ENCODE measurements at regions of chr4 and their contacts with region 1.

Region 1: DNA sequence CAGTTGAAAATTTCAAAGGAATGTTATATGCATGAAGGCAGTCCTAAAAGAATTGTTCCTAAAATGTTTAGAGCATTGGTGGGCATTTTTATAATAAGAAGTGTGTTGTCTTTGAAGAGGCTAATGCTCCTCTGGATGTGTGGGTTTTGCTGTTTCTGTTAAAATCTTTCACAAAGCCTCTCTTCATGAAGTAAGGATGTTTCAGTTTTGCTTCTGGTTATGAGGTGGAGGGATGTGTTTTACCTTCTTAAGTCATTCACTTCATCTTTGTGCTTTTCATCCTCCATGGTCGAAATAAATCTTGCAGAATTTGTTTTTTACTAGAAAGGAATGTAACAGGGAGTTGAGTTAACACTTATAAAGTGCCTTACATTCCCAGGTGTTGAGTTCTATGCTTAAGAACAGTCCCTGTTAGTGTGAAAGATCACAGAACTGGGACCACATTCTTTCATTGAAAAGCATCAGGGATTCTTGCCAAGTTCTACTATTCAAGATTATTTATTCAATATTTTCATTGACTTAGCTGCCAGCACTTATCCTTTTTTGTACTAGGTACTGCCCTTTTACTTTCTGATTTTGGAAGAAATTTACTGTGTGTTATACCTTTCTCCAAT is 21.1 kb downstream of the FHIP1A start:
- DNase-seq: no peak
- H3K4me3 Mint-ChIP-seq: no peak overlapping the region
- H3K27ac Mint-ChIP-seq: peak overlapping the region; percentile 15
- H3K4me1 Mint-ChIP-seq: peaks cover 57% of the 10 kb centered on the region
- H3K27me3 Mint-ChIP-seq: no peaks in the 10 kb centered on the region
- CTCF ChIP-seq: no peak

Region 2: GRCh38 chr4:151408630-151409469 is 21.2 kb before region 1 on chr4 and contains the start of gene FHIP1A:
- CTCF ChIA-PET with region 1: interaction called, 5 read pairs
- POLR2A ChIA-PET with region 1: interaction called, 30 read pairs
- intact Hi-C with region 1: no loop called
- DNase-seq: peak; percentile 95
- H3K4me3 Mint-ChIP-seq: peak within 1 kb of the TSS; percentile 90
- H3K27ac Mint-ChIP-seq: peak within 1 kb of the TSS; percentile 94
- H3K4me1 Mint-ChIP-seq: peaks cover 22% of the 10 kb centered on the region
- H3K27me3 Mint-ChIP-seq: no peaks in the 10 kb centered on the region
- CTCF ChIP-seq: no peak
- total RNA-seq, gene FHIP1A: 14.8 and 19.8 TPM in 2 replicates

Region 3: DNA sequence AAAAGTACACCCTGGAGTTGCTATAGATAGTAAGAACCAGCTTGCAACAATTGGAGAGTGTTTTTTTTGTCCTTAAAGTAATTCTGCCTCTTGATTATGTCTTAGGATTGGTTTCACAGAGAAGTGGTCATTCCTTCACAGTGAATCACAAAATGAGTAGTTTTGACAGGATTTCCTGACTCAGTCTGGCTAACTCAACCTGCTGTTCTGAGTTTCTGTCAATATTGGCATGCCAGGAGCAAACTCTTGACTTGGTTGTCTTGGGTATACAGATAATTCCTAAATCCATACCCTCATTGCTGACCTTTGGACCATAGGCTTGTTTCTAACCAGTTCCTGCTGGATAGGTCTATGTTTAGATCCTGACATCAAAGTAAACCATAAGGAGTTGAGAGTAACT is 11.7 kb before region 1 on chr4:
- CTCF ChIA-PET with region 1: interaction called, 3 read pairs
- POLR2A ChIA-PET with region 1: interaction called, 16 read pairs
- intact Hi-C with region 1: no loop called
- DNase-seq: peak; percentile 86
- H3K4me3 Mint-ChIP-seq: no peak overlapping the region
- H3K27ac Mint-ChIP-seq: peak overlapping the region; percentile 89
- H3K4me1 Mint-ChIP-seq: peaks cover 43% of the 10 kb centered on the region
- H3K27me3 Mint-ChIP-seq: no peaks in the 10 kb centered on the region
- CTCF ChIP-seq: no peak